Endothelial cell of umbilical vein (primary cell): ENCODE measurements at regions of chr3 and their contacts with region 1.

Region 1: GRCh38 chr3:161220850-161221753 is at the start of gene NMD3:
- DNase-seq: peak; percentile 95
- H3K4me3 ChIP-seq: peak within 1 kb of the TSS; percentile 68 to 96 (median 94)
- H3K27ac ChIP-seq: peak within 1 kb of the TSS; percentile 83
- H3K4me1 ChIP-seq: peaks cover 27% of the 10 kb centered on the region
- H3K27me3 ChIP-seq: no peaks in the 10 kb centered on the region
- CTCF ChIP-seq: no peak
- POLR2A ChIP-seq: peak; percentile 93
- total RNA-seq, gene NMD3: 53.8 and 57.9 TPM in 2 replicates

Region 2: GRCh38 chr3:160754855-160755747 is 466.0 kb before region 1 on chr3:
- CTCF ChIA-PET with region 1: no interaction called
- POLR2A ChIA-PET with region 1: no interaction called
- dilution Hi-C with region 1: no loop called
- intact Hi-C with region 1: loop called (anchors 2 kb)
- DNase-seq: peak; percentile 95
- H3K4me3 ChIP-seq: peak overlapping the region; percentile 49 to 80 (median 71)
- H3K27ac ChIP-seq: peak overlapping the region; percentile 84
- H3K4me1 ChIP-seq: peaks cover 8% of the 10 kb centered on the region
- H3K27me3 ChIP-seq: peaks cover 5 to 13% of the 10 kb centered on the region in 2 experiments
- CTCF ChIP-seq: no peak
- POLR2A ChIP-seq: no peak

Region 3: DNA sequence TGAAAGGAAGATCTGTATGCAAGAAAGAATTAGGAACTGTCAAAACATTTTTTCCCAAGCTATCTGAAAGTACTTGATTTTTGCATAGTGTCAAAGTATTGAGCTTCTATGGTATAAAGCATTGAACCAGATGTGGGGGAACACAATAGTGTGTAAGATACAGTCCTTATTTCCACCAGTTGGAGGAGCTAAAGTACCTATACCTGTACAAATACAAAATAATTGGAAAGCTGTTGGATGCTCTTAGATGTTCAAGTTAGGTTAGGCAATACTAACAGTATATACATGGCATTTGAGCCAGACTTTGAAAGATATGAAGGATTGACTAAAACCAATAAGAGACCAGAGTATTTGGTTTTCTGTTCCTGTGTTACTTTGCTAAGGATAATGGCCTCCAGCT is 264.3 kb before region 1 on chr3:
- CTCF ChIA-PET with region 1: interaction called, 11 read pairs
- POLR2A ChIA-PET with region 1: no interaction called
- dilution Hi-C with region 1: no loop called
- intact Hi-C with region 1: loop called (anchors 2 kb)
- DNase-seq: peak; percentile 50
- H3K4me3 ChIP-seq: no peak overlapping the region
- H3K27ac ChIP-seq: no peak overlapping the region
- H3K4me1 ChIP-seq: no peaks in the 10 kb centered on the region
- H3K27me3 ChIP-seq: no peaks in the 10 kb centered on the region
- CTCF ChIP-seq: peak; percentile 25 to 35
- POLR2A ChIP-seq: no peak

Region 4: DNA sequence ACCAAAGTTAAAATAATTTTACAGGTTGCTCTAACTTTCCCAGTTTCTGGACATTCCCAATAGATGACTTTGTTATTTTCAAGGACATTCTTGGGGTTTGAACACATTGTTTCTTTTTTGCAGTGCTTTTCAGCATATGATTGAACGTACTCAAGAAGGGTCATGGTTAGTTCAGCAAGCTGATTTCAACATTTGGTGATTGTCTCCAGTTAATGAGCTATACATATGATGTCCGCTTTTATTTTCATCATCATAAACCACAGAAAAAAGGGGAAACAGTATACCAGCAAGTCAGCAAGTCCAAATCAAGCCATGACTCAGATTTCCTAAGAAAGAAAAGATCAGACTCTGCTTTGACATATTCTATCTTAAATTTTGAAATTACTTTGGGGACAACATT is 185.4 kb before region 1 on chr3:
- CTCF ChIA-PET with region 1: no interaction called
- POLR2A ChIA-PET with region 1: interaction called, 5 read pairs
- dilution Hi-C with region 1: no loop called
- intact Hi-C with region 1: loop called (anchors 1 kb)
- DNase-seq: peak; percentile 82
- H3K4me3 ChIP-seq: peak overlapping the region in 1 of 3 experiments; percentile 48
- H3K27ac ChIP-seq: peak overlapping the region; percentile 74
- H3K4me1 ChIP-seq: peaks cover 21% of the 10 kb centered on the region
- H3K27me3 ChIP-seq: no peaks in the 10 kb centered on the region
- CTCF ChIP-seq: no peak
- POLR2A ChIP-seq: no peak

Region 5: DNA sequence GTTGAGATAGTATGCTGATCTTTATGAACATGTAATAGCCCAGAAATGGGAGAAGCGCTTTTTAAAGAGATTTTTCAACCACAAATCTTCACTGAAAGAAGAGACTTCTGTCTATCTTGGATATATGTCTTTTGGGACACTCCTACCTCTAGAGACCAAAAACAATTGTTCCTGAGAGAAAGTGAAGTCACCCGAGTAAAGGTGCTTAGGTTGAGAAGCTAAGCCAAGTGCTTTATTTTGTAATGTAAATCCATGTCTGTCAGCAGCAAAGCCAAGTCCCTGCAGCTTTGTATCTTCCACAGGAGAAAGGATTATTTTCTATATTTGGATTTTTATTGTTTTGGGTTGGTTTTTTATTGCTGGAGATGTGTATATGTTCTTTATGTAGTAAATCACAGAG is 83.8 kb before region 1 on chr3:
- CTCF ChIA-PET with region 1: no interaction called
- POLR2A ChIA-PET with region 1: no interaction called
- dilution Hi-C with region 1: no loop called
- intact Hi-C with region 1: no loop called
- DNase-seq: no peak
- H3K4me3 ChIP-seq: no peak overlapping the region
- H3K27ac ChIP-seq: no peak overlapping the region
- H3K4me1 ChIP-seq: peaks cover 14% of the 10 kb centered on the region
- H3K27me3 ChIP-seq: no peaks in the 10 kb centered on the region
- CTCF ChIP-seq: no peak
- POLR2A ChIP-seq: no peak

Region 6: GRCh38 chr3:161266731-161267166 is 45.6 kb after region 1 on chr3:
- CTCF ChIA-PET with region 1: interaction called, 3 read pairs
- POLR2A ChIA-PET with region 1: no interaction called
- dilution Hi-C with region 1: no loop called
- intact Hi-C with region 1: loop called (anchors 2 kb)
- DNase-seq: peak; percentile 87
- H3K4me3 ChIP-seq: no peak overlapping the region
- H3K27ac ChIP-seq: peak overlapping the region; percentile 86
- H3K4me1 ChIP-seq: peaks cover 23% of the 10 kb centered on the region
- H3K27me3 ChIP-seq: no peaks in the 10 kb centered on the region
- CTCF ChIP-seq: no peak
- POLR2A ChIP-seq: no peak

Region 7: GRCh38 chr3:161415497-161416251 is 194.6 kb after region 1 on chr3:
- CTCF ChIA-PET with region 1: no interaction called
- POLR2A ChIA-PET with region 1: no interaction called
- dilution Hi-C with region 1: no loop called
- intact Hi-C with region 1: loop called (anchors 5 kb)
- DNase-seq: peak; percentile 93
- H3K4me3 ChIP-seq: peak overlapping the region in 1 of 3 experiments; percentile 10
- H3K27ac ChIP-seq: peak overlapping the region; percentile 97
- H3K4me1 ChIP-seq: peaks cover 19% of the 10 kb centered on the region
- H3K27me3 ChIP-seq: no peaks in the 10 kb centered on the region
- CTCF ChIP-seq: no peak
- POLR2A ChIP-seq: no peak